ENCODE measurements at regions of chr22 and their contacts with region 1.

Region 1: DNA sequence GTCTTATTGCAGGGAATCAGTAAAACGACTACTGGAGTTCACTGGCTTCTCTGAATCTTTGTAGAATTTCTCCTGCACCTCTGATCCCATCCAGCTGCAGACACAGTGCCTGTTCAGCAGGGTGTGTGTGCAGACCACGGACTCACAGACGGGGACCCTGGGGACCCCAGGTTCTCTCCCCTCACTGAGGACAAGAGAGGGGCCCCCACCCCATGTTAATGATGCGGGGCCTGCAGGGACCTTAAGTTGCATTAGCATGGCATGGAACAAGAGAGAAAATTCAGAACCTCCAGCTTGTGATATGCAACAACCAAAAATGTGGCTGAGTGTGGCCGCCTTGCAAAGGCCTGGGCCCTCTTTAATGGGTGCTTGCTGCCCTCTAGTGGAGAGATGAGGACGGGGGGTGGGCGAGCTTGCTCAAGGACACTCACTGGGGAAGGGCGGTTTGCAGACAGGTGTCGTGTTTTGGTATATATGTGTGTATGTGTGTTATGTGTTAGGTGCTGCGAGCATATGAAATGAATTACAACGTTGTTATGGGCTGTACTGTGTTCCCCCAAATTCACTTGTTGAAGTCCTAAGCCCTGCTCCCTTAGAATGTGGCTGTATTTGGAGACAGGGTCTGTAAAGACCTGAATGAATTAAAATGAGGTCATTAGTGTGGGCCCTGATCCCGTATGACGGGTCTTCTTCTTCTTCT is 84.4 kb upstream of the SEPTIN5 start:
- DNase-seq: peak; percentile 38 to 54
- ATAC-seq: peak; percentile 88 to 91
- H3K4me3 ChIP-seq: no peak overlapping the region
- H3K27ac ChIP-seq: no peak overlapping the region
- H3K4me1 ChIP-seq: no peaks in the 10 kb centered on the region
- H3K27me3 ChIP-seq: peaks cover 0 to 2% (median 0%) of the 10 kb centered on the region in 3 donors
- CTCF ChIP-seq: peak; percentile 85 to 94 (median 92)
- POLR2A ChIP-seq: no peak

Region 2: GRCh38 chr22:18954990-18955571 is 674.8 kb before region 1 on chr22:
- in situ Hi-C with region 1: loop called in 2 of 4 experiments (anchors 25 kb)
- intact Hi-C with region 1: loop called (anchors 1 kb)
- DNase-seq: no peak
- ATAC-seq: peak in 1 of 2 donors; percentile 10
- H3K4me3 ChIP-seq: no peak overlapping the region
- H3K27ac ChIP-seq: no peak overlapping the region
- H3K4me1 ChIP-seq: no peaks in the 10 kb centered on the region
- H3K27me3 ChIP-seq: no peaks in the 10 kb centered on the region
- CTCF ChIP-seq: no peak
- POLR2A ChIP-seq: no peak

Region 3: DNA sequence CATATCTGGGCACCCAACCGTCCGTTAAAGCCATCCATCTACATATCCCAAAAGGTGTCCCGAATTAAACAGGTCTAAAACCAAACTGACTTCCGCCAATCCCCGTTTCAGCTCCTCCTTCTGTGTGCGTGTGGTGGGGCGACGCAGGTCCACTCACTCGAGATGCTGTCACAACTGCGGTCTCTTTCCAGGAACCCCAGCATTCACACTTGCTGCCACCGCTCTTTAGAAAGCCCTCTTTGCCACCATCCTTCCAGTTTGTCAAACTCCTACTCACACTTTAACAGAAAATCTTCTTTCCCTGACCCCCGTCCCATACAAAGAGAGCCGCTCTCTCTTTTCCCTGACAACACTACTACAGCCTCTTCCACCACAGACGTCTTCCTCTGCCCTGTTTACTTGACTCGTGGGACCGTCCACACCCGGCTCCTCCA is 485.9 kb before region 1 on chr22:
- in situ Hi-C with region 1: loop called in 1 of 4 experiments (anchors 25 kb)
- intact Hi-C with region 1: loop called (anchors 2 kb)
- DNase-seq: no peak
- ATAC-seq: peak in 1 of 2 donors; percentile 8
- H3K4me3 ChIP-seq: peak overlapping the region; percentile 78 to 96 (median 89)
- H3K27ac ChIP-seq: peak overlapping the region; percentile 81 to 86 (median 84)
- H3K4me1 ChIP-seq: peaks cover 8% of the 10 kb centered on the region in 2 donors
- H3K27me3 ChIP-seq: peaks cover 9 to 12% (median 11%) of the 10 kb centered on the region in 3 donors
- CTCF ChIP-seq: no peak
- POLR2A ChIP-seq: no peak

Region 4: DNA sequence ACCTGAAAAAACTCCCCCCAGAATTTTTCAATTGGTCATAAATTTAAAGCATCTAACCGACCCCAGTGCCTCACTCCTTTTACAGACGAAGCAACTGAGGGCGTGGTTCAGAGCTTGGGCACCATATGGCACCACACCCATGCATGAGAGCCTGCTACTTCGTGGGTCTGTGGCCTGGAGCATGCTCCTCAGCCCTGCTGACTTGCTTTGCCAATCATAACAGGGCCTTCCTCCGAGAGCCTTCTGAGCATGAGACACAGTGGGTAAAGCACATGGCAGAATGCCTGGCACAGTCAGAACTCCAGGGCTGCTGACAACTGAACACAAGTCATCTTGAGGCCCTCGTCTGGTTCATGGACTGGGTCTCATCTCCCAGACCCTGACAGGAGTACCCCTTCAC is 231.7 kb before region 1 on chr22:
- in situ Hi-C with region 1: loop called in 1 of 4 experiments (anchors 25 kb)
- intact Hi-C with region 1: no loop called
- DNase-seq: no peak
- ATAC-seq: no peak
- H3K4me3 ChIP-seq: no peak overlapping the region
- H3K27ac ChIP-seq: no peak overlapping the region
- H3K4me1 ChIP-seq: no peaks in the 10 kb centered on the region
- H3K27me3 ChIP-seq: no peaks in the 10 kb centered on the region
- CTCF ChIP-seq: no peak
- POLR2A ChIP-seq: no peak

Region 5: GRCh38 chr22:19479357-19480172 is 150.3 kb before region 1 on chr22 and contains the start of gene CDC45:
- in situ Hi-C with region 1: loop called in 1 of 4 experiments (anchors 10 kb)
- intact Hi-C with region 1: no loop called
- DNase-seq: peak; percentile 96 to 97
- ATAC-seq: peak; percentile 92 to 95
- H3K4me3 ChIP-seq: peak within 1 kb of the TSS; percentile 63 to 78 (median 70)
- H3K27ac ChIP-seq: peak within 1 kb of the TSS; percentile 90 to 98 (median 97)
- H3K4me1 ChIP-seq: peaks cover 33 to 35% of the 10 kb centered on the region in 2 donors
- H3K27me3 ChIP-seq: no peaks in the 10 kb centered on the region
- CTCF ChIP-seq: no peak
- POLR2A ChIP-seq: no peak
- total RNA-seq, gene CDC45: 0.27 TPM in 1 of 4 donors, not detected in the others

Region 6: GRCh38 chr22:19535001-19535400 is 94.9 kb before region 1 on chr22:
- in situ Hi-C with region 1: no loop called
- intact Hi-C with region 1: no loop called
- DNase-seq: no peak
- ATAC-seq: no peak
- H3K4me3 ChIP-seq: no peak overlapping the region
- H3K27ac ChIP-seq: no peak overlapping the region
- H3K4me1 ChIP-seq: no peaks in the 10 kb centered on the region
- H3K27me3 ChIP-seq: peaks cover 0 to 3% (median 0%) of the 10 kb centered on the region in 3 donors
- CTCF ChIP-seq: no peak
- POLR2A ChIP-seq: no peak